Lower leg skin (tissue), 4 donors: ENCODE measurements at regions of chr11 and their contacts with region 1.

Region 1: GRCh38 chr11:67507864-67508485 is at the start of gene CDK2AP2:
- DNase-seq: peak; percentile 98 to 100
- H3K4me3 ChIP-seq: peak within 1 kb of the TSS; percentile 58
- CTCF ChIP-seq: no peak
- POLR2A ChIP-seq: no peak
- total RNA-seq, gene CDK2AP2: 16.3 to 40.4 (median 27.8) TPM

Region 2: DNA sequence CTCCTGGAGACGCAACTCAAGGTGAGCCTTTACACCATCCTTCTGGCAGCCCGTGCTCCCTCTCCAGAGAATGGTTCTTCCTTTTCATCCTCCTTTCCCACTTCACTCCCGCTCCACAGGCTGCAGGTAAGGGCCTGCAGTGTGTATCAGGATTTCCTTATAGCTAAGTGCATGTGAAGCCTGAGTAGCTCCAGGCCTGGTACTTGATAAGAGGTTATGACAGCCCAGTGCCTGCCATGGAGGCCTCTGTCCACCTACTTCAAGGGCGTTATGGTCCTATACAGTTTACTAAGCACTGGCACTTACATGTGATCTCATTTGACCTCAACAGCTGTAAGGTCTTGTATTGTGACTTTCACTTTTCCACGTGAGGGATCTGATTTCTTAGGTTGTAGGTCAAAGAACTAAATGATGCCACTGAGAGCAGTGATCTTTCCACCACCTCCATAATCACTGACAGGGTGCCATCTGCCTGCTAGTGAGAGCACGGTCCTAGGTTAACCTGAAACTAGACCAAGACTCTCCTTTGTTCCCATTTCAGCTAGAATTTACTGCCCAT is 186.6 kb before region 1 on chr11:
- intact Hi-C with region 1: no loop called
- DNase-seq: no peak
- H3K4me3 ChIP-seq: no peak overlapping the region
- CTCF ChIP-seq: no peak
- POLR2A ChIP-seq: no peak

Region 3: DNA sequence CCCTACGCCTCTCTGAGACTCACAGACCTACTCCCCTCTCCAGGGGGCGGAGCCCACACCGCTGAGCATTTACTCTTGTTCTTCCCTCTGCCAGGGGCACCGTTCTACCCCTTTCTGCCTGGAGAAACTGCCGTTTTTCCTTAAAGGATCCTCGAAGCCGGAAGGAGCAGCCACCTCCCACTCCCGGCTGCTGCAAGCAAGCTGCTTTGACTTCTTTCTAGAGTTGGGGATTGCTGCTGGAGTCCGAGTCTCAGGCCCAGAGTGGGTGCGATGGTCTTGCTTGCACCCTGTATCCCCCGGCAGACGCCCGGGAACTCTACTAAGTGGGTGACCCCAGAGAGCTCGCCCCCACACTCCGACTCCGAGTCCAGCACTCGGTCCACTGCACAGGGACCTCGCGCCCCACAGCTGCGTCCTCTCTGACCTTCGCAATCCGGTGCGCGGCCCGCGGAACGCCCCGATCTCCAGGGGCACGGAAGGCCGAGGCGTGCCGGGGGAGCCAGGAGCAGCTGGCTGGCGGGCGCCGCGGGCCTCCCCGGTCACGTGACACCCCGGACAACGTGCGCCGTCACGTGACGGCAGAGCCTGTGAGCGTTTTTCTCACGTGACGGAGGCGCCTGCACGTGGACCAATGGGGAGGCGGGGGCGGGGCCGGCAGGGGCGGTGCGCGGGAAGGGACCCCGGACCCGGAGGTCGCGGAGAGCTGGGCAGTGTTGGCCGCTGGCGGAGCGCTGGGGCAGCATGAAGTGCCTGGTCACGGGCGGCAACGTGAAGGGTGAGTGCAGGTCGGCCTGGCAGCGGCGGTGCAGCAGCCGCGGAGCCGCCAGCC is 116.5 kb before region 1 on chr11 and contains the start of gene RAD9A:
- intact Hi-C with region 1: loop called (anchors 10 kb)
- DNase-seq: peak; percentile 92 to 99
- H3K4me3 ChIP-seq: peak within 1 kb of the TSS; percentile 65
- CTCF ChIP-seq: peak in 1 of 3 donors; percentile 5
- POLR2A ChIP-seq: no peak
- total RNA-seq, gene RAD9A: 24.9 to 28.5 (median 27.2) TPM

Region 4: GRCh38 chr11:67617243-67617953 is 109.4 kb after region 1 on chr11:
- intact Hi-C with region 1: no loop called
- DNase-seq: no peak
- H3K4me3 ChIP-seq: no peak overlapping the region
- CTCF ChIP-seq: no peak
- POLR2A ChIP-seq: no peak